ENCODE measurements at regions of chr1 and their contacts with region 1.

Region 1: GRCh38 chr1:20376880-20377494 is 86.3 kb downstream of the VWA5B1 start:
- DNase-seq: no peak
- H3K4me3 ChIP-seq: no peak overlapping the region
- H3K27ac ChIP-seq: no peak overlapping the region
- H3K4me1 ChIP-seq: no peaks in the 10 kb centered on the region
- H3K27me3 ChIP-seq: peaks cover 0 to 71% (median 0%) of the 10 kb centered on the region in 4 donors
- CTCF ChIP-seq: peak; percentile 59 to 87 (median 59)
- EP300 ChIP-seq: no peak
- POLR2A ChIP-seq: no peak

Region 2: GRCh38 chr1:20212685-20213331 is 164.2 kb before region 1 on chr1:
- intact Hi-C with region 1: loop called (anchors 10 kb)
- DNase-seq: no peak
- H3K4me3 ChIP-seq: no peak overlapping the region
- H3K27ac ChIP-seq: no peak overlapping the region
- H3K4me1 ChIP-seq: peaks cover 0 to 16% (median 12%) of the 10 kb centered on the region in 4 donors
- H3K27me3 ChIP-seq: peaks cover 0 to 7% (median 0%) of the 10 kb centered on the region in 4 donors
- CTCF ChIP-seq: peak; percentile 65 to 84 (median 80)
- EP300 ChIP-seq: no peak
- POLR2A ChIP-seq: no peak

Region 3: GRCh38 chr1:20279509-20279908 is 97.5 kb before region 1 on chr1:
- intact Hi-C with region 1: no loop called
- DNase-seq: no peak
- H3K4me3 ChIP-seq: no peak overlapping the region
- H3K27ac ChIP-seq: no peak overlapping the region
- H3K4me1 ChIP-seq: no peaks in the 10 kb centered on the region
- H3K27me3 ChIP-seq: peaks cover 0 to 33% (median 0%) of the 10 kb centered on the region in 4 donors
- CTCF ChIP-seq: no peak
- EP300 ChIP-seq: no peak
- POLR2A ChIP-seq: no peak

Region 4: DNA sequence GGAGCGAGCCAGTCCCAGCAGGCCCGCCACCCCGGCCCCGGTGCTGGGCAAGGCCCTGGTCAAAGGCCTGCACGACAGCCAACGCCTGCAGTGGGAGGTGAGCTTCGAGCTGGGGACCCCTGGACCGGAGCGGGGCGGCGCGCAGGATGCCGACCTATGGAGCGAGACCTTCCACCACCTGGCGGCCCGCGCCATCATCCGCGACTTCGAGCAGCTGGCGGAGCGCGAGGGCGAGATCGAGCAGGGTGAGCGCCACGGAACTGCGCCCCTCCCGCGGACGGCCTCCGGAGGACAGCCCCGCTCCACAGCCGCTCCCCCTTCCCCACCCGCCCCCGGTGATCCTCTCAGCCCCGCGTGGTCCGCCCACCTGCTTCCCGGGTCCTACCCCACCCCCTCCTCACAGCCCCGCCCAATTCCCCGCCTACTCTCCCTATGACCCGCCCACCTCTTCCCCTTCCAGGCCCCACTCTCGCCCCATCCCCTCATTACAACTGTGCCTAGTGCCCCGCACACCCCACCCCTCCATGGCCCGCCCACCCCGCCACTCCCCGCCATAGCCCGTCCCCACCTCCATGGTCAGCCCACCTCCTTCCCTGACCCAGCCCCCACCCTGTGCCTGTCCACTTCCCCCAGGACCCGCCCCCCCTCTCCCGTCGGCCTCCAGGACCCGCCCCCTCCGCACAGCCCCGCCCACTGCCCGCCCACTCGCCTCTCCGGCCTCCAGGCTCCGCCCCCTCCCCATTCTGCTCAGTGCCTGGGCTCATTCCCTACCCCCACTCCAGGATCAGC is 33.6 kb before region 1 on chr1:
- intact Hi-C with region 1: no loop called
- DNase-seq: no peak
- H3K4me3 ChIP-seq: peak overlapping the region; percentile 33 to 52 (median 38)
- H3K27ac ChIP-seq: no peak overlapping the region
- H3K4me1 ChIP-seq: peaks cover 4 to 15% (median 14%) of the 10 kb centered on the region in 4 donors
- H3K27me3 ChIP-seq: peaks cover 0 to 45% (median 13%) of the 10 kb centered on the region in 4 donors
- CTCF ChIP-seq: no peak
- EP300 ChIP-seq: no peak
- POLR2A ChIP-seq: no peak

Measured in esophagus muscularis mucosa (tissue), 4 donors.